Ovary (tissue), 10 donors: ENCODE measurements at regions of chr6 and their contacts with region 1.

Region 1: GRCh38 chr6:35522660-35523658 is 10.3 kb upstream of the TULP1 start:
- DNase-seq: peak; percentile 79 to 86 (median 85)
- H3K4me3 ChIP-seq: peak overlapping the region; percentile 22
- H3K27ac ChIP-seq: no peak overlapping the region
- H3K4me1 ChIP-seq: no peaks in the 10 kb centered on the region
- H3K27me3 ChIP-seq: no peaks in the 10 kb centered on the region
- CTCF ChIP-seq: peak; percentile 90 to 98 (median 94)
- EP300 ChIP-seq: no peak
- POLR2A ChIP-seq: no peak

Region 2: GRCh38 chr6:35573495-35574110 is 50.6 kb after region 1 on chr6:
- intact Hi-C with region 1: loop called in 1 of 4 experiments (anchors 10 kb)
- DNase-seq: no peak
- H3K4me3 ChIP-seq: no peak overlapping the region
- H3K27ac ChIP-seq: no peak overlapping the region
- H3K4me1 ChIP-seq: peaks cover 2% of the 10 kb centered on the region
- H3K27me3 ChIP-seq: no peaks in the 10 kb centered on the region
- CTCF ChIP-seq: no peak
- EP300 ChIP-seq: no peak
- POLR2A ChIP-seq: no peak

Region 3: DNA sequence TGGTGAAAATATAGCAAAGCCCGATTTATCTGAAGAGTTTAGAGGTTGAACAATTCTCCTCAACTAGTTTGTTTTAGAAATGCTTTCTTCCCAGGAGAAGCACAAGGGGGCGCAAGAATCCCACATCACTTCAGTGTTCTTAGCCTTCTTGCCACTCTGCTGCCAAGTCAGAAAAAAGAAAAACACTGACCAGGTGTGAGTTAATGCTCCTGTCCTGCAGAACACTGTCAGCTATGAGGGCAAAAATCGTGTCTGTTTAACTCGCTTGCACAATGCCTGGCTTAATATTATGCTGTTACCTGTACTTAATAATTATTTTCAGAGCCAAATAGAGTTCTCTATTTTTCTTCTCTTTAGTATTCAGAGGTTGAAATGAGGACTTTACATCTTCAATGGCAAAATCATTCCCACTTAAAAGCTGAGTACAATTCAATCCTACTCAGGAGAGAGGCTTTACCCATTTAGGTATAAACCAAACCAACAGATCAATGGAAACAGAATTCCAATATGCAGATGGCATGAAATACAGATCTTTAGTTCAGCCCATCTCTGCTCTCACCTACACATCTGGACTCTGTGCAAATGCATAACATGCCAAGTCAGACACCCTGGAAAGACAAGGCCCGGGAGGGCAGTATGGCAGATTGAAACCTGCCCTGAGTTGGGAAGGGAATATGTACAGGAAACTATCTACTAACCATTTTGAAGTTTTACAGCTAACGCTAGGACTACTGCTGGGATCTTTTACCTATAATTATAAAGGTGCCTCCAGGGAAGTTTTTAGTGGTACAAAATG is 61.1 kb after region 1 on chr6:
- intact Hi-C with region 1: loop called in 3 of 4 experiments (anchors 5 to 10 kb)
- DNase-seq: peak in 4 of 5 donors; percentile 60 to 83 (median 72)
- H3K4me3 ChIP-seq: no peak overlapping the region
- H3K27ac ChIP-seq: no peak overlapping the region
- H3K4me1 ChIP-seq: peaks cover 5% of the 10 kb centered on the region
- H3K27me3 ChIP-seq: no peaks in the 10 kb centered on the region
- CTCF ChIP-seq: peak; percentile 77 to 89 (median 85)
- EP300 ChIP-seq: no peak
- POLR2A ChIP-seq: no peak

Region 4: DNA sequence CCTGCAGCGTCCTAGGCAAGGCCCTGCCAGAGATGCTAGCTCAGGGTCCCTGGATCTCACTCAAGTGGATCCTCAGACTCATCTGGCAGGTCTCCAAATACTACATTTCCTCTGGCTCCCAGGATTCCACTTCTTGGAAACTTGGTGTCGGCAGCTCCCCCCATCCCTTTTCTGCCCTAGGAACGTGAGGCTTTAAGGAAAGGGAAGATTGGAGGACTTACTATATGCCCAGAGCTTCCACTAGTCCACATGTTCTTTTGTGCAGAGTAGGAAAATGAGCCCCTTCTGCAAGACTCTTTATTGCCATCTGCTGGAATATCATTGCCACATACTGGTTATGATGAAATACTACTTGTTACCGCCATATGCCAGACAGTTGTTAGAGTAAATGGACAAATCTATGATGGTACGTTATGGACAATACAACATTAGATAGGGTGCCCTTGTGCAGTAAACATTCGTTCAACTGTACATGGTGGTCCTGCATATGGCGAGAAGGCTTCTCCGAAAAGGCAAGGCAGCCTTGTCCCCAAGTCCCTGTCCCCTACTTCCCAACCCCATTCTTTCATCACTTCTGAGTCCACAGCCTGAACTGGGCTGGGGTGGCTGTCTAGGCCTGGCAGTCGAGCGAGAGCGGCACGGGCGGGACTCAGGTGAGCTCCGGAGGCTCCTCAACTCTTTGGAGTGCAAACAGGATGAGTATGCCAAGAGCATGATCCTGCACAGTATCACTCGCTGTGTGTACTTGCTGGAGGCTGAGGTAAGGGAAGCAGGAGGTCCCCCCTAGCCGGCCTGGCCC is 214.7 kb after region 1 on chr6:
- intact Hi-C with region 1: loop called (anchors 1 to 5 kb)
- DNase-seq: peak in 1 of 5 donors; percentile 41
- H3K4me3 ChIP-seq: no peak overlapping the region
- H3K27ac ChIP-seq: no peak overlapping the region
- H3K4me1 ChIP-seq: peaks cover 4% of the 10 kb centered on the region
- H3K27me3 ChIP-seq: no peaks in the 10 kb centered on the region
- CTCF ChIP-seq: peak; percentile 83 to 97 (median 97)
- EP300 ChIP-seq: no peak
- POLR2A ChIP-seq: no peak

Region 5: DNA sequence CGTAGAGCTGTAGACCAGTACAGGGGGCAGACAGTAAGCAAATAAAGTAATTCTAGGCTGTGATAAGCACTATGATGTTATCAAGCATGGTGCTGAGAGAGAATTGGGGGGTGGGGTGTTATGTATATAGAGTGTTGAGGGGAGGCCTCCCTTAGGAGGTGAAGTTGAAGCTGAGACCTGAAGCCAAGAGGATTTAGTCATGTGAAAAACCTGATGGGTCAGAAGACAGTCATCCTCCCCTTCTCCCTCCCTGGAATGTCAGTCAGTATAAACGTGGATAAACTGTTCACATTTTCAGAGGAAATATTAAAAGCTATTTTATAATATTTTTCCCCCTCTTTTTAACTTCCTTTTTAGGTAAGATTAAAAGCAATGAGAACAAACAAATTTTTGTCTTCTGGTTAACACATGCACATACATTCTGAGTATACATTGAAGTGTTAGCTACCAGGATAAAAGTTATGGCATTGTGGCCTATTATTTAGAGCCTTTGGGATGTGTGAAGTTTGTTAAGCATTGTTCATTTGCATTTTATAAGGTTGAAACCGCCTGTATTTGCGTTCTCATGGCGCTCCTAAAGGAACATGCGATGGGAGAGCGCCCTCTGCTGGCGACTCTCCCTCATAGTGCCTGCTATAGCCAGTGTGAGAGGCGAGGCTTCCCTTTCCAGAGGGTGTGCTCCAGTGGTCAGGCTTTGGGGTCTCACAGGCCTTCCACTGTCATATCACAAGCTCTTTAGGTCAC is 572.0 kb after region 1 on chr6:
- intact Hi-C with region 1: loop called in 1 of 4 experiments (anchors 10 kb)
- DNase-seq: peak; percentile 70 to 89 (median 84)
- H3K4me3 ChIP-seq: no peak overlapping the region
- H3K27ac ChIP-seq: no peak overlapping the region
- H3K4me1 ChIP-seq: no peaks in the 10 kb centered on the region
- H3K27me3 ChIP-seq: no peaks in the 10 kb centered on the region
- CTCF ChIP-seq: peak; percentile 83 to 95 (median 84)
- EP300 ChIP-seq: no peak
- POLR2A ChIP-seq: peak; percentile 17